ENCODE measurements at regions of chr18 and their contacts with region 1.

Region 1: GRCh38 chr18:57698571-57699276 is 77.1 kb upstream of the NARS1 start:
- DNase-seq: peak; percentile 23
- H3K4me3 ChIP-seq: no peak overlapping the region
- H3K27ac ChIP-seq: peak overlapping the region; percentile 22
- H3K27me3 ChIP-seq: no peaks in the 10 kb centered on the region
- CTCF ChIP-seq: no peak

Region 2: GRCh38 chr18:57687970-57688369 is 10.8 kb before region 1 on chr18:
- CTCF ChIA-PET with region 1: no interaction called
- POLR2A ChIA-PET with region 1: interaction called, 11 read pairs
- DNase-seq: no peak
- H3K4me3 ChIP-seq: no peak overlapping the region
- H3K27ac ChIP-seq: no peak overlapping the region
- H3K27me3 ChIP-seq: no peaks in the 10 kb centered on the region
- CTCF ChIP-seq: no peak

Region 3: DNA sequence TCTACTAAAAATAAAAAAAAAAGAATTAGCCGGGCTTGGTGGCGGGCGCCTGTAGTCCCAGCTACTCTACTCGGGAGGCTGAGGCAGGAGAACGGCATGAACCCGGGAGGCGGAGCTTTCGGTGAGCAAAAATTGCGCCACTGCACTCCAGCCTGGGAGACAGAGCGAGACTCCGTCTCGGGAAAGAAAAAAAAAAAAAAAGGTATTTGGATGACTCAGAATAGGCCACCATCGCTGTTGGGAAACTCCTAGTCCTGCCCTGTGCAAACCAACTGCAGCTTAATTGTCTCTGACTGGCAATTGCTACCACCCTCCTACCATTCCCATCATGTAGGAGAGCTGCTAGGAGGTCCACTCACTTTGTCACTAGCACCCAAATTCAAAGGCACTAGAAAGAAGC is 60.9 kb after region 1 on chr18:
- CTCF ChIA-PET with region 1: no interaction called
- POLR2A ChIA-PET with region 1: no interaction called
- DNase-seq: no peak
- H3K4me3 ChIP-seq: no peak overlapping the region
- H3K27ac ChIP-seq: no peak overlapping the region
- H3K27me3 ChIP-seq: no peaks in the 10 kb centered on the region
- CTCF ChIP-seq: no peak

Measured in AG04450 (cell line).